Activated CD4-positive, alpha-beta T cell treated with anti-CD3 and anti-CD28 coated beads, Interleukin-2, amount 10 ng/mL, durations not matched to agents 24 days and 14 days (primary cell): ENCODE measurements at regions of chr5 and their contacts with region 1.

Region 1: DNA sequence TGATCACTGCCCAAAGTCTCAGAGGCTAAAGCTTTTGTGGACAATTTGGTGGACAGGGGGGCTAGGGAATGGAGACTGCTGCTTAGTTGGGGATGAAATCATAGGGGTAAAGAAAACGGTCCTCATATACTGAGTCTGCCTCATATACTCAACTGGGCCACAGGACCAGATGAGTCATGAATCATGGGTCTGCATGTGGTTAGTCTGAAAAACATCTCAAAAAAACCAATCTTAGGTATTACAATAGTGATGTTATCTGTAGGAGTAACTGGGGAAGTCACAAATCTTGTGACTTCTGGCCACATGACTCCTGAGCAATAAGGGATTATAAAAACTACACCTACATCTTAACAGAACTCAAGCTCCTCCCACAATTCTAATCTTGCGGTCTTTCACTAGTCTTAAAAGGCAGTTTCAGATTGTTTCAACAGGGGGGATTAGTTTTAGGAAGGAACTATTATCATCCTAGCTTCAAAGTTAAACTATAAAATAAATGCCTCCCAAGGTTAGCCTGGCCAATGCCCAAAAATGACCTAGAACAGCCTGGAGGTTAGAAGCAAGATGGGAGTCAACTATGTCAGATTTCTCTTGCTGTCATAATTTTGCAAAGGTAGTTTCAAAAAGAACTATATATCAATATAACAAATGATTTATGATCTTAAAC is 17.5 kb downstream of the TMEM161B start:
- DNase-seq: peak; percentile 64
- H3K4me3 Mint-ChIP-seq: peak overlapping the region; percentile 10
- H3K27ac Mint-ChIP-seq: peak overlapping the region; percentile 84
- H3K4me1 Mint-ChIP-seq: peaks cover 41% of the 10 kb centered on the region
- H3K27me3 Mint-ChIP-seq: no peaks in the 10 kb centered on the region

Region 2: GRCh38 chr5:88203981-88204750 is 47.0 kb before region 1 on chr5:
- intact Hi-C with region 1: loop called (anchors 1 kb)
- DNase-seq: peak; percentile 75
- H3K4me3 Mint-ChIP-seq: peak overlapping the region; percentile 50
- H3K27ac Mint-ChIP-seq: peak overlapping the region; percentile 82
- H3K4me1 Mint-ChIP-seq: peaks cover 8% of the 10 kb centered on the region
- H3K27me3 Mint-ChIP-seq: no peaks in the 10 kb centered on the region

Region 3: DNA sequence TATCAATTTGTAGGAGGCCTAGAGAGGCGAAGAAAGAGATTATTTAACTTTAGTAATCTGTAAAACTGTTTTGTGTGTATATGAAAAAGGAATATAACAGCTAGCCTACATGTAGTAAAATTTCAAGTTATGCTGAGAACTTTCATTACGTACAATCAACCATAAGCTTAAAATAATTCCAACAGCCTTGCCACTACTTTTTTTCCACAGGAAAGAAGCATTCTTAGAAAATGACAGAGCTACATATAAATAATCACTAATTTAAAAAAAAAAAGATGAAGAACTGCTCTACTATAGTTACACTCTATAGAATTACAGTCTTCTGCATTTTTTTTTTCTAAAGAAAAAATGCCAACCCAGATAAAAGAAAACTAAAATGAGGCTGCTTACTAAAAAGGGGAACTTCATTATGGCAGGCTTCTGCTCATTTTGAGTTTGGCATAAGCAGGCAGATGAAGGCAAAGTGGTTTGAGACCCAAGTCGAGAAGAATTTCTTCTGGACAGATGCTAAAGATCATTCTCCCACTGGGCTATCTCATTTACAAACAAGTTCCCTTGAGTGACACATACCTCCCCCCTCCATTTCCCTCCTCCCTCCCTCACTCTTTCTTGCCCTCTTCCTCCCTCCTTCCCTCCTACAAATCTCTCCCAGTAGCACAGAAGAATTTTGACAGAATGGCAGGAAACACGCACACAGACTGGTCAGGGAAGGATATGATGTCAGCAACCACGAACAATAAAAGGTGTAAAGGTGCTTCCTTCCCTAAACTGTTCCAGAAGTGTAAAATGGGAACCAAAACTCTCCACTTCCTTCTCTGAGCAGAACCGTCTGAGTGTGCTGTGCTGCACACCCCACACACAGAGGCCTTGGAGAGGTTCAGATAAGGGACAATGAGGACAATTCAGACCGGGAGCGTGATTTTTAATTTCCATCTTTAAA is 575.7 kb after region 1 on chr5:
- intact Hi-C with region 1: loop called (anchors 5 kb)
- DNase-seq: peak; percentile 55
- H3K4me3 Mint-ChIP-seq: peak overlapping the region; percentile 36
- H3K27ac Mint-ChIP-seq: peak overlapping the region; percentile 35
- H3K4me1 Mint-ChIP-seq: peaks cover 34% of the 10 kb centered on the region
- H3K27me3 Mint-ChIP-seq: peaks cover 15% of the 10 kb centered on the region